ENCODE measurements at regions of chr12 and their contacts with region 1.

Region 1: GRCh38 chr12:1583421-1584078 is 10.8 kb downstream of the FBXL14 start:
- DNase-seq: peak; percentile 58
- H3K4me3 Mint-ChIP-seq: no peak overlapping the region
- H3K27ac Mint-ChIP-seq: no peak overlapping the region
- H3K4me1 Mint-ChIP-seq: peaks cover 23% of the 10 kb centered on the region
- H3K27me3 Mint-ChIP-seq: peaks cover 5% of the 10 kb centered on the region

Region 2: DNA sequence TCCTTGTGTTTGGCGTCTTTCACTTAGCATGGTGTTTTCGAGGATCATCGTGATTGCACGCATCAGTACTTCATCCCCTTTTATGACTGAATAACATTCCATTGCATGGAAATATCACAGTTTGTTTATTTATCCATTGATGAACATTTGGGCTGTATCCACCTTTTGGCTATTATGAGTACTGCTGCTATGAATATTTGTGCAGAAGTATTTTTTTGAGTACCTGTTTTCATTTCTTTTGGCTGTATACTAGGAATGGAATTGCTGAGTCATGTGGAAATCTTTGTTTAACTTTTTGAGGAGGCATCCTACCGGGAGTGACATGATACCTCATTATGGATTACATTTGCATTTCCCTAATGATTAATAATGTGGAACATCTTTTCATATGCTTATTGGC is 764.8 kb before region 1 on chr12:
- intact Hi-C with region 1: loop called (anchors 2 kb)
- DNase-seq: no peak
- H3K4me3 Mint-ChIP-seq: no peak overlapping the region
- H3K27ac Mint-ChIP-seq: no peak overlapping the region
- H3K4me1 Mint-ChIP-seq: peaks cover 66% of the 10 kb centered on the region
- H3K27me3 Mint-ChIP-seq: no peaks in the 10 kb centered on the region

Region 3: DNA sequence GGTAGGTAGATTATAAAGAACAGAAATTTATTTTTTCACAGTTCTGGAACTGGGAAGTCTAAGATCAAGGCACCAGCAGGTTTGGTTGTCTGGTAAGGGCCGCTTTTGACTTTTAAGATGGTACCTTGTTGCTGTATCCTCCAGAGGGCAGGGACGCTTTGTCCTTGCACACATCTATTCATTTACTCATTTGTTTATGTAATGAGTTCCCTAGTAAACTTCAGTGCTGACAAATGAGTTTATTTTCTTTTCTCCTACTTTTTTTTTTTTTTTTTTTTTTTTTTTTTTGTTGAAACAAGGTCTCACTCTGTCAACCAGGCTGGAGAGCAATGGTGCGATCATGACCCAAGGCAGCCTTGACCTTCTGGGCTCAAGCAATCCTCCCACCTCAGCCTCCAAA is 184.9 kb before region 1 on chr12:
- intact Hi-C with region 1: loop called (anchors 1 kb)
- DNase-seq: no peak
- H3K4me3 Mint-ChIP-seq: no peak overlapping the region
- H3K27ac Mint-ChIP-seq: no peak overlapping the region
- H3K4me1 Mint-ChIP-seq: no peaks in the 10 kb centered on the region
- H3K27me3 Mint-ChIP-seq: no peaks in the 10 kb centered on the region

Measured in activated T-helper 1 cell treated with anti-CD3 and anti-CD28 coated beads, Interleukin-12 subunit alpha, Interleukin-12 subunit beta, Interleukin-2, Interleukin-4 antibody, amounts not matched to agents 30 ng/mL and 10 ng/mL and 1 ng/mL, durations not matched to agents 14 hours and 24 hours and 36 hours (primary cell).